ENCODE measurements at regions of chr9 and their contacts with region 1.

Region 1: GRCh38 chr9:90914868-90915483 is 113.4 kb downstream of the SYK start:
- DNase-seq: peak; percentile 83
- ATAC-seq: peak; percentile 94
- H3K4me3 Mint-ChIP-seq: no peak overlapping the region
- H3K27ac Mint-ChIP-seq: no peak overlapping the region
- H3K4me1 Mint-ChIP-seq: peaks cover 7% of the 10 kb centered on the region
- H3K27me3 Mint-ChIP-seq: no peaks in the 10 kb centered on the region

Region 2: GRCh38 chr9:90904714-90905478 is 10.1 kb before region 1 on chr9:
- CTCF ChIA-PET with region 1: interaction called, 14 read pairs
- DNase-seq: no peak
- ATAC-seq: no peak
- H3K4me3 Mint-ChIP-seq: no peak overlapping the region
- H3K27ac Mint-ChIP-seq: no peak overlapping the region
- H3K4me1 Mint-ChIP-seq: no peaks in the 10 kb centered on the region
- H3K27me3 Mint-ChIP-seq: peaks cover 23% of the 10 kb centered on the region

Region 3: DNA sequence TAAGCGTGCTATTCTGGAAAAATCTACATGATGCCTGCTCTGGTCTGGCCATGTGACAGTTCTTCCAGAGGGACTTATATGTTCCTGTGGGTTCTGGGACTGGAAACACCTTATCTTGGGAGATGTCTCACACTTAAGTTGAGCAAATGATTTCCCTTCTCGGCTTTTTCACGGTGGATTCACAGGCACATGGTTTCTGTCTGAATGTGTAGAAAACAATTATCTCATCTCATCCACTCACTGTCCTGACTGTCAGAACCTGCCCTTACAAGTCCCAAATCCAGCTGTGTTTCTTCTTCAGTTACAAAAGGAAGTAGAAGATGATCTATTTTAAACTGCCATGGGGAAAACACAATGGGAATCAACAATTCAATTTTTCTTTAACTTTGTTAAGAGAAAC is 70.7 kb after region 1 on chr9:
- CTCF ChIA-PET with region 1: interaction called, 12 read pairs
- DNase-seq: no peak
- ATAC-seq: no peak
- H3K4me3 Mint-ChIP-seq: no peak overlapping the region
- H3K27ac Mint-ChIP-seq: no peak overlapping the region
- H3K4me1 Mint-ChIP-seq: peaks cover 8% of the 10 kb centered on the region
- H3K27me3 Mint-ChIP-seq: no peaks in the 10 kb centered on the region

Region 4: GRCh38 chr9:91036826-91037510 is 122.0 kb after region 1 on chr9:
- CTCF ChIA-PET with region 1: interaction called, 21 read pairs
- DNase-seq: peak; percentile 90
- ATAC-seq: peak; percentile 95
- H3K4me3 Mint-ChIP-seq: peak overlapping the region; percentile 34
- H3K27ac Mint-ChIP-seq: peak overlapping the region; percentile 63
- H3K4me1 Mint-ChIP-seq: peaks cover 66% of the 10 kb centered on the region
- H3K27me3 Mint-ChIP-seq: no peaks in the 10 kb centered on the region

Region 5: DNA sequence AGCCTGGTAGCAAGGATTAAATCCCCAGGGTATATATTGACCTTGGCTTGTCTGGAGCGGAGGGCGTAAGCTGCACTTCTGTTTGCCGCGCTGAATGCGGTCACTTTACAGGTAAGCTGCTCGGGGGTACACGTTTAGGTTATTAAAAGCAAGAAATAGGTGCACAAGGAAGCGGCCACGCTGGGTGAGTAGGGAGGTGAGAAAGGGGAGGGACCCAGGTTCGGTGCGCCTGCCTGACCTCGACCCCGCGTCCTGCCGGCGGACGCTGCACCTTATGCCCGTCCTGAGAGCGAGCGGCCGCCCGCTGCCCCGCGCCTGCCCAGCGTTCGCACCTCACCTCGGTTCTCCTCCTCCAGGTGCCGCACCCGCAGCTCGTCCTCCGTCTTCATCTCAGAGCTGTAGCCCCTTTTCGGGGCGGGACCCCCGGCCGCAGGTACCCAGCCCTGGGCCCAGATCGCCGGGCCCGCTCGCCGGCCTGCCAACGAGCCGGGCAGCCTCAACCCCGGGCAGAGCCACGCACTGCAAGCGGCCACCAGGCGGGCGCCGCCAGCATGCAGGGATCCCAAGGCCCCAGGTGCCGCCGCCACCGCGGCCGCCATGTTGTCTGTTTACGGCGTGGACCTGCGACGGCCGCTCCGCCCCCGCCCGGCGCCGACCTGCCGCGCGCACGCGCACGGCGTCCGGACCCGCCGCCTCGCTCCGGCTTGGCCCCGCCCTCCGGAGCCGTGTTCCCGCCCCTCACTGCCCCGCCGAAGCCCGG is 446.5 kb after region 1 on chr9 and contains the start of gene AUH:
- CTCF ChIA-PET with region 1: interaction called, 10 read pairs
- DNase-seq: peak; percentile 89
- ATAC-seq: peak; percentile 86
- H3K4me3 Mint-ChIP-seq: peak within 1 kb of the TSS; percentile 90
- H3K27ac Mint-ChIP-seq: peak within 1 kb of the TSS; percentile 90
- H3K4me1 Mint-ChIP-seq: peaks cover 57% of the 10 kb centered on the region
- H3K27me3 Mint-ChIP-seq: no peaks in the 10 kb centered on the region
- total RNA-seq, gene AUH: 33.5 to 36.1 TPM

Region 6: DNA sequence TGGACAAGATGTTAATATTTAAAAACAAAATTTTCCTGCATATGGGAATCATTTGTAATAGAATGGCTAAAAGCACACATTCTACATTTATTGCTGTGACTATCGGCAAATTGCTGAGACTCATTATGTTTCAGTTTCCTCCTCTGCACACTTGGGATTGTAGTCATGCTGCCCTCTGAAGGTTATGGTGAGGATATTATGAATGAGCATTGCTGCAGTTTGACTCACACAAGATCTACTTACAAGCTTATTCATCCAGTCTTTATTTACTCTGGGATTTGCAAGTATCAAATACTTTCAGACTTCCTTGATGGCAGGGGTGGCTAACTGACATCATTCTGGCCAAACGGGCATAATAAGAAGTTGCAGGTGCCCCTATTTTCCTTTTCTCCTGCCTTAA is 518.2 kb after region 1 on chr9:
- CTCF ChIA-PET with region 1: interaction called, 113 read pairs
- DNase-seq: no peak
- ATAC-seq: peak; percentile 95
- H3K4me3 Mint-ChIP-seq: no peak overlapping the region
- H3K27ac Mint-ChIP-seq: no peak overlapping the region
- H3K4me1 Mint-ChIP-seq: peaks cover 30% of the 10 kb centered on the region
- H3K27me3 Mint-ChIP-seq: peaks cover 19% of the 10 kb centered on the region

Measured in activated CD8-positive, alpha-beta memory T cell treated with anti-CD3 and anti-CD28 coated beads, Interleukin-2, amount 10 ng/mL, durations not matched to agents 7 days and 5 days (primary cell).